CD14-positive monocyte (primary cell): ENCODE measurements at regions of chr14 and their contacts with region 1.

Region 1: GRCh38 chr14:88005978-88006851 is 1.3 kb downstream of the GPR65 start:
- DNase-seq: peak; percentile 79 to 90 (median 90)
- H3K4me3 ChIP-seq: peak overlapping the region; percentile 63 to 99 (median 86)
- H3K4me3 Mint-ChIP-seq: peak overlapping the region; percentile 70 to 86
- H3K27ac ChIP-seq: peak overlapping the region; percentile 79 to 89
- H3K27ac Mint-ChIP-seq: peak overlapping the region; percentile 90 to 96 (median 92)
- H3K4me1 ChIP-seq: peaks cover 58 to 81% of the 10 kb centered on the region in 2 donors
- H3K4me1 Mint-ChIP-seq: peaks cover 76% of the 10 kb centered on the region
- H3K27me3 ChIP-seq: no peaks in the 10 kb centered on the region
- H3K27me3 Mint-ChIP-seq: peaks cover 0 to 1% (median 0%) of the 10 kb centered on the region in 3 donors
- CTCF ChIP-seq: no peak

Region 2: GRCh38 chr14:87847216-87847755 is 158.9 kb before region 1 on chr14:
- intact Hi-C with region 1: no loop called
- DNase-seq: no peak
- H3K4me3 ChIP-seq: no peak overlapping the region
- H3K4me3 Mint-ChIP-seq: no peak overlapping the region
- H3K27ac ChIP-seq: no peak overlapping the region
- H3K27ac Mint-ChIP-seq: no peak overlapping the region
- H3K4me1 ChIP-seq: no peaks in the 10 kb centered on the region
- H3K4me1 Mint-ChIP-seq: no peaks in the 10 kb centered on the region
- H3K27me3 ChIP-seq: no peaks in the 10 kb centered on the region
- H3K27me3 Mint-ChIP-seq: peaks cover 0 to 1% (median 0%) of the 10 kb centered on the region in 3 donors
- CTCF ChIP-seq: no peak

Region 3: GRCh38 chr14:88385345-88386101 is 379.3 kb after region 1 on chr14 and contains the start of gene SPATA7:
- intact Hi-C with region 1: loop called in 1 of 2 experiments (anchors 10 kb)
- DNase-seq: peak; percentile 80 to 87 (median 86)
- H3K4me3 ChIP-seq: peak within 1 kb of the TSS; percentile 80 to 96 (median 94)
- H3K4me3 Mint-ChIP-seq: peak within 1 kb of the TSS; percentile 97 to 98
- H3K27ac ChIP-seq: peak within 1 kb of the TSS; percentile 1 to 82
- H3K27ac Mint-ChIP-seq: peak within 1 kb of the TSS in 6 of 7 donors; percentile 90 to 95 (median 92)
- H3K4me1 ChIP-seq: peaks cover 6 to 13% of the 10 kb centered on the region in 2 donors
- H3K4me1 Mint-ChIP-seq: peaks cover 18% of the 10 kb centered on the region
- H3K27me3 ChIP-seq: peaks cover 3 to 4% of the 10 kb centered on the region in 2 donors
- H3K27me3 Mint-ChIP-seq: peaks cover 7 to 15% (median 11%) of the 10 kb centered on the region in 3 donors
- CTCF ChIP-seq: no peak
- polyA plus RNA-seq, gene SPATA7: 2.2 to 4.8 (median 3.4) TPM